Heart left ventricle (tissue), 16 donors: ENCODE measurements at regions of chr6 and their contacts with region 1.

Region 1: GRCh38 chr6:163711615-163712565 is 297.4 kb downstream of the QKI start:
- DNase-seq: peak; percentile 80 to 91 (median 84)
- ATAC-seq: peak; percentile 71 to 80 (median 77)
- H3K4me3 ChIP-seq: peak overlapping the region in 1 of 12 donors; percentile 12
- H3K27ac ChIP-seq: peak overlapping the region; percentile 67 to 88 (median 78)
- H3K4me1 ChIP-seq: peaks cover 24 to 63% (median 61%) of the 10 kb centered on the region in 12 donors
- H3K27me3 ChIP-seq: no peaks in the 10 kb centered on the region
- CTCF ChIP-seq: peak in 11 of 12 donors; percentile 20 to 59 (median 41)
- POLR2A ChIP-seq: no peak

Region 2: DNA sequence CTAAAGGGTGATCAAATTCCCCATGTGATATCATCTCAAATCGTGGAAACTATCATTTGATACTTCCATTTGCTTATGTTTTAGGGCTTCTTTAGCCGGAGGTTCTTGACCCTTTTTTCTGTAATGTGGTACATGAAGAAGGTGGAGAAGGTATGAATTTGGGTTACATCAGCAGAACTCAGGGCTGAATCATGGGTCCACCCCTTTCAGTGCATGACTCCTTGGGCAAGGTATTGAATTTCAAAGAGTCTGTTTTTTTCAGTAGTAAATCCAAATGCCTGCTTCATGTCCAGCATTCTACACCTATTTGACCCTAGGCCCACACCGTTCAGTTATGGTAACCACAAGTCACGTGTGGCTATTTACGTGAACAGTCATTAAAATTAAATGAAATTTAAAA is 328.0 kb before region 1 on chr6:
- intact Hi-C with region 1: no loop called
- DNase-seq: no peak
- ATAC-seq: no peak
- H3K4me3 ChIP-seq: no peak overlapping the region
- H3K27ac ChIP-seq: no peak overlapping the region
- H3K4me1 ChIP-seq: peaks cover 0 to 10% (median 0%) of the 10 kb centered on the region in 12 donors
- H3K27me3 ChIP-seq: no peaks in the 10 kb centered on the region
- CTCF ChIP-seq: no peak
- POLR2A ChIP-seq: no peak

Region 3: DNA sequence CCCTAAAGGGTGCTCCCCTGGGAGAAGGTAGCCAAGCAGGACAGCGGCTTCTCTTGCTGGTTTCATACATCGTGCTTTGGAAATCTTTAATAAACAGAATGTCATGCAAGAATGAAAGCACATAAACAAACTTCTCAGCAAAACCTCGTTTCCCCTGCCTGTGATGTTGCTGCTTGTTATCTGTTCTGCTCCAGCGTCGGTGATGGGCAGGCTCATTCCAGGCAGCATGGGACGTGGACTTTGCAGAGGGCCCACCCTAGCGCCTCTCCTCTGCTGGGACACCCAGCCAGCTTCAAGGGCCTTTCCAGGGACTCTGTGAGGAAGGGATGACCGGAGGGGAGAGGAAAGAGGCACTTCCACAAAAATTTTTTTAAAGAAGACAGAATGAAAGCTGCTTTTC is 99.7 kb before region 1 on chr6:
- intact Hi-C with region 1: loop called in 1 of 10 experiments (anchors 10 kb)
- DNase-seq: no peak
- ATAC-seq: no peak
- H3K4me3 ChIP-seq: no peak overlapping the region
- H3K27ac ChIP-seq: no peak overlapping the region
- H3K4me1 ChIP-seq: peaks cover 0 to 3% (median 0%) of the 10 kb centered on the region in 12 donors
- H3K27me3 ChIP-seq: no peaks in the 10 kb centered on the region
- CTCF ChIP-seq: no peak
- POLR2A ChIP-seq: no peak

Region 4: GRCh38 chr6:163764565-163764964 is 52.7 kb after region 1 on chr6:
- intact Hi-C with region 1: loop called in 3 of 10 experiments (anchors 2 to 5 kb)
- DNase-seq: no peak
- ATAC-seq: peak; percentile 50 to 79 (median 74)
- H3K4me3 ChIP-seq: no peak overlapping the region
- H3K27ac ChIP-seq: peak overlapping the region in 10 of 12 donors; percentile 19 to 72 (median 54)
- H3K4me1 ChIP-seq: peaks cover 0 to 26% (median 15%) of the 10 kb centered on the region in 12 donors
- H3K27me3 ChIP-seq: no peaks in the 10 kb centered on the region
- CTCF ChIP-seq: no peak
- POLR2A ChIP-seq: no peak

Region 5: GRCh38 chr6:163806755-163807499 is 95.0 kb after region 1 on chr6:
- intact Hi-C with region 1: no loop called
- DNase-seq: no peak
- ATAC-seq: peak in 1 of 4 donors; percentile 47
- H3K4me3 ChIP-seq: no peak overlapping the region
- H3K27ac ChIP-seq: no peak overlapping the region
- H3K4me1 ChIP-seq: no peaks in the 10 kb centered on the region
- H3K27me3 ChIP-seq: no peaks in the 10 kb centered on the region
- CTCF ChIP-seq: no peak
- POLR2A ChIP-seq: no peak

Region 6: GRCh38 chr6:163943607-163944385 is 231.9 kb after region 1 on chr6:
- intact Hi-C with region 1: loop called in 3 of 10 experiments (anchors 2 to 10 kb)
- DNase-seq: peak in 4 of 5 donors; percentile 55 to 72 (median 65)
- ATAC-seq: peak; percentile 71 to 80 (median 74)
- H3K4me3 ChIP-seq: peak overlapping the region in 1 of 12 donors; percentile 32
- H3K27ac ChIP-seq: peak overlapping the region in 10 of 12 donors; percentile 12 to 71 (median 42)
- H3K4me1 ChIP-seq: peaks cover 8 to 39% (median 27%) of the 10 kb centered on the region in 12 donors
- H3K27me3 ChIP-seq: no peaks in the 10 kb centered on the region
- CTCF ChIP-seq: no peak
- POLR2A ChIP-seq: no peak